ENCODE measurements at regions of chr22 and their contacts with region 1.

Region 1: GRCh38 chr22:23385291-23386244 is 194.5 kb downstream of the IGLL1 start:
- DNase-seq: peak; percentile 94
- H3K4me3 ChIP-seq: no peak overlapping the region
- H3K27ac ChIP-seq: peak overlapping the region in 1 of 2 donors; percentile 50
- H3K4me1 ChIP-seq: peaks cover 27% of the 10 kb centered on the region
- H3K27me3 ChIP-seq: no peaks in the 10 kb centered on the region
- CTCF ChIP-seq: peak; percentile 100
- POLR2A ChIP-seq: no peak

Region 2: DNA sequence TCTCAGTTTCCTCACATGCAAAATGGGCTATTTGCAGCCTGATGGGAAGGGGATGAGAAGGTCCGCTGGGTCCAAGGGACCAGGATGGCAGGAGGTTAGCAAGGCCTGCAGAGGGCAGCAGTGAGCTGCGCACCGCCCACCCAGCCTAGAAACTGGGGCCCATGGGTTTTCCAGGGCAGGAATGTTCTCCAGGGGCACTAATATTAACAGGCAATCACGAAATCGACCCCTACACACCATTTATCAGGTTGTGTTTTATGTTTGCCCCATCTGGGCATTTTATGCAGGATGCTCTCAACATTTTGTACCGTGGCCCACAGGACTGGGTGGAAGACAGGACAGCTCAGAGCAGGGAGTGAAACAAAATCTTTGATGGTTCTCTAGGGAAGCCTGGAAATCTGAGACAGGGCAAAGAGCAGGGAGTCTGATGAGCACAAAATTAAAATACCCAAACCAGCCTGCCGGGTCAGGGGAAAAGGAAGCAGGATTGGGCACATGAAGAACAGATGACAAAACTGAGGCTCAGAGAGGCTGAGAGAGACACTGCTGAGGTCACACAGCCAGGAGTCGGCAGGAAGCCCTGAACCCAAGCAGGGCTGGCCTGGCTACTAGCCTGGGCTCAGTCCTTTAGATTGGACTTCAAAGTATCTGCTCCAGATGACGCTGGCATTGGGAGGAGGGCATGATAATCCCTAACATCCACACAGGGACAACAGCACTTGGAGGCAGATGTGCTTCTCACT is 206.9 kb before region 1 on chr22:
- intact Hi-C with region 1: loop called (anchors 10 kb)
- DNase-seq: peak; percentile 71
- H3K4me3 ChIP-seq: no peak overlapping the region
- H3K27ac ChIP-seq: peak overlapping the region; percentile 75 to 86
- H3K4me1 ChIP-seq: peaks cover 43% of the 10 kb centered on the region
- H3K27me3 ChIP-seq: no peaks in the 10 kb centered on the region
- CTCF ChIP-seq: peak; percentile 92 to 95 (median 92)
- POLR2A ChIP-seq: no peak

Region 3: DNA sequence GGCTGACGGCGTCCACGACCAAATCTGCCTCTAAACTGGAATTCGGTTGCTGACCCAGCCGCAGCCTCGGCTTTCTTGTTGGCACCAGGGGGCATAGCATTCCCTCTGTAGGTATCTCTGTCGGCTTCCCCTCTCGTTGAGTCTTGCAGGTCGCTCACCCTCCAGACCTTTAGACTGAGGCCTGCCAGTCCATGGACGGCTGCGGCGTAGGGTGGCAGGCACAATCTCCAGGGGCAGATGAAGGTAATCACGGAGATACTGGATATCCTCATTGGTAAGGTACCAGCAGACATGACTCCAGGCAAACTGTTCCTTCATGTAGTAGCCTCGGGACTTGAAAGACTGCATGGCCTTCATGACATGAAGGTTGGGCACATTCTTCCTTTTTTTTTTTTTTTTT is 63.0 kb before region 1 on chr22:
- intact Hi-C with region 1: loop called (anchors 10 kb)
- DNase-seq: no peak
- H3K4me3 ChIP-seq: no peak overlapping the region
- H3K27ac ChIP-seq: no peak overlapping the region
- H3K4me1 ChIP-seq: no peaks in the 10 kb centered on the region
- H3K27me3 ChIP-seq: no peaks in the 10 kb centered on the region
- CTCF ChIP-seq: no peak
- POLR2A ChIP-seq: no peak

Measured in testis (tissue), 5 donors.